ENCODE measurements at regions of chrX and their contacts with region 1.

Region 1: DNA sequence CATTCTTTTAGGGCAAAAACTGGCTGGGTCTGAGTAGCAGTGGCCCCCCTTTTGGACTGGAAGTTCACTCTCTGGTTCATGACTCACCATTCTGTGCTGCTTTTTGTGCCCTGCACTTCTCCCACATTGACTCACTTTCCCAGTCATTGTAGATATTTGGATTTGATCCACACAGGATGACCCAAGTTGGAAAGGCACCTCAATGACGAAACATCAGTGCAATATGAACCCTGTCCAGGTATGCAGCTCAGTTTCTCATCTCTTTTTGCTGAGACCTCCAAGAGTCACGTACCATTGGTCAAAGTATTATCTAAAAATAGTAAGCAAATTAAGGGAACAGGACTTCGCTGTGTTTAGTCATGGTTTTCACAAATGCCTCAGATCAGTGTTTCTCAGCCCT is 92.7 kb downstream of the CBLL2 start:
- DNase-seq: peak; percentile 98
- ATAC-seq: peak; percentile 90
- H3K4me3 ChIP-seq: no peak overlapping the region
- H3K27ac ChIP-seq: peak overlapping the region; percentile 73
- H3K4me1 ChIP-seq: peaks cover 20% of the 10 kb centered on the region
- H3K27me3 ChIP-seq: no peaks in the 10 kb centered on the region
- CTCF ChIP-seq: no peak

Region 2: DNA sequence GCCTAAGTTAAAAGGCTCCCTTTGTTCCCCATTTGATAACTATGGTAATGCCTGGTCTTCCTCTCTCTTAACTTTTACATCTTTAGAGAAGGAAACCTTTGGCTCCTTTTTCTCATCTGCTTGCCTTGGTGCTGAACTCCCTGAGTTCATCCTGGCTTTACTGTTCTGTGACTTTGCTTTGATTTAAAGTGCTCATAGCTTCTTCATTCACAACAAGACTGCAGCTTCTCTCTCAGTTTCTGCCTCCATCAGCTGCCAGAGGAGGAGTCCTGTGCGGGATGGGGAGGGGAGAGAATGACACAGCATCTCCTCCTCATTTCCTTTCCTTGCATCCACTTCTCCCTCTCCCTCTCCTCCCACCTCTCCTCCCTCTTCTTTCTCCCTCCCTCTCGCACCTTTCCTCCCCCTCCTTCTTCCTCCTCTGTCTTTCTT is 50.8 kb before region 1 on chrX:
- CTCF ChIA-PET with region 1: no interaction called
- POLR2A ChIA-PET with region 1: interaction called, 3 read pairs
- intact Hi-C with region 1: loop called (anchors 2 kb)
- DNase-seq: peak; percentile 23
- ATAC-seq: peak; percentile 72
- H3K4me3 ChIP-seq: 0 out of 2 replicates have a peak overlapping the region, but pooled peaks have one; percentile 14
- H3K27ac ChIP-seq: peak overlapping the region; percentile 66
- H3K4me1 ChIP-seq: peaks cover 19% of the 10 kb centered on the region
- H3K27me3 ChIP-seq: no peaks in the 10 kb centered on the region
- CTCF ChIP-seq: no peak